A549 (cell line): ENCODE measurements at regions of chr11 and their contacts with region 1.

Region 1: DNA sequence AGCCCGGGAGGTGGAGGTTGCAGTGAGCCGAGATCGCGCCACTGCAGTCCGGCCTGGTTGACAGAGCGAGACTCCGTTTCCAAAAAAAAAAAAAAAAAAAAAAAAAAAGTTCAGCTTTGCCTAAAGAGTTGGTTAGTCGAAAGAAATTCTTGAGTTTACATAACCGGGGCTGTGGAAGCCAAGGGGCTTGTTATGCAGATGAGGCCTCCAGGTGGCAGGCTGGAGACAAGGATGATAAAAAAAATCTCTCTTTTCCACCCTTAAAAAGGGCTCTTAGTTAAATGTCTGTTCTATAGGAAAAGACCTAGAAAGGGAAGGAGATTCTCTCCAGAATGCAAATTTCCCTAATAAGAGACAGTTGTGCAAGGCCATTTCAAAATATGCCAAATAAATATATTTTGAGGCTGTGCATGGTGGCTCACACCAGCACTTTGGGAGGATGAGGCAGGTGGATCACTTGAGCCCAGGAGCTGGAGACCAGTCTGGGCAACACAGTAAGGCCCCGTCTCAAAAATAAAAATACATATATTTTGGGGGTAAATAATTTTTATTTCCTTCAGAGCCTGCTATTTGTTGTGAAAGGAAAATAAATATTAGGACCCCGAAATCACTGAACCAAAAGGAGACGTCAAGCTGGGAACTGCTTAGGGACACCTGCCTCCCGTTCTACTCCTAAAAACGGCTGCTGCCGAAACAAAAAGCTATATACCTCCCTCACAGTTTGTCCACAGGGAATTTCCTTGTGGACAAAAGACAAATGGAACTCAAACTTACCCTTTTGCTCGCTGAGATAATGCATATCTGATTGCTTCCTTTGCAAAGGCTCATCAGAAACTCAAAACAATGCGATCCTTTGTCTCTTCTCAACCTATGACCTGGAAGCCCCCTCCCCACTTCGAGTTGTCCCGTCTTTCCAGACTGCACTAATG is 2.4 kb upstream of the IFITM2 start:
- DNase-seq: peak; percentile 74 to 84
- ATAC-seq: peak; percentile 53 to 62; a peak in 4 of 6 replicates
- H3K4me3 ChIP-seq: no peak overlapping the region
- H3K27ac ChIP-seq: peak overlapping the region in 1 of 2 experiments; percentile 69; a peak in 3 of 6 replicates
- H3K4me1 ChIP-seq: peaks cover 22% of the 10 kb centered on the region; the same call in 2 of the 3 replicates
- CTCF ChIP-seq: peak; percentile 68
- EP300 ChIP-seq: no peak
- POLR2A ChIP-seq: no peak
- RAD21 ChIP-seq: peak; percentile 69 to 70

Region 2: DNA sequence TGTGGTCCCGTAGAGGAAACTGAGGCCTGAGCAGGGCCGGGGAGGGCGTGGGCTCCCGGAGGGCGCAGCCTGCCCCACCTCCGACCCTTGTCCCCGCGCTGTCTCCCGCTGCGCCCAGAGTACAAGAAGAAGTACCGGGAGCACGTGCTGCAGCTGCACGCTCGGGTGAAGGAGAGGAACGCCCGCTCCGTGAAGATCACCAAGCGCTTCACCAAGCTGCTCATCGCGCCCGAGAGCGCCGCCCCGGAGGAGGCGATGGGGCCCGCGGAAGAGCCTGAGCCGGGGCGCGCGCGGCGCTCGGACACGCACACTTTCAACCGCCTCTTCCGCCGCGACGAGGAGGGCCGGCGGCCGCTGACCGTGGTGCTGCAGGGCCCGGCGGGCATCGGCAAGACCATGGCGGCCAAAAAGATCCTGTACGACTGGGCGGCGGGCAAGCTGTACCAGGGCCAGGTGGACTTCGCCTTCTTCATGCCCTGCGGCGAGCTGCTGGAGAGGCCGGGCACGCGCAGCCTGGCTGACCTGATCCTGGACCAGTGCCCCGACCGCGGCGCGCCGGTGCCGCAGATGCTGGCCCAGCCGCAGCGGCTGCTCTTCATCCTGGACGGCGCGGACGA is 25.1 kb before region 1 on chr11:
- CTCF ChIA-PET with region 1: interaction called, 13 read pairs
- POLR2A ChIA-PET with region 1: no interaction called
- DNase-seq: peak in 1 of 2 experiments; percentile 48
- ATAC-seq: peak; percentile 52 to 65
- H3K4me3 ChIP-seq: peak overlapping the region; percentile 33
- H3K27ac ChIP-seq: 0 out of 6 replicates have a peak overlapping the region, but pooled peaks of 1 of the 2 experiments have one; percentile 6
- H3K4me1 ChIP-seq: peaks cover 14% of the 10 kb centered on the region; the same call in 1 of the 3 replicates
- CTCF ChIP-seq: no peak
- EP300 ChIP-seq: no peak
- POLR2A ChIP-seq: no peak
- RAD21 ChIP-seq: no peak

Region 3: GRCh38 chr11:316031-316701 is 11.0 kb after region 1 on chr11:
- CTCF ChIA-PET with region 1: interaction called, 38 read pairs
- POLR2A ChIA-PET with region 1: no interaction called
- DNase-seq: no peak
- ATAC-seq: no peak
- H3K4me3 ChIP-seq: no peak overlapping the region
- H3K27ac ChIP-seq: no peak overlapping the region
- H3K4me1 ChIP-seq: peaks cover 9% of the 10 kb centered on the region; the same call in 1 of the 3 replicates
- CTCF ChIP-seq: no peak
- EP300 ChIP-seq: no peak
- POLR2A ChIP-seq: no peak
- RAD21 ChIP-seq: no peak

Region 4: GRCh38 chr11:363948-364761 is 59.0 kb after region 1 on chr11:
- CTCF ChIA-PET with region 1: interaction called, 75 read pairs
- POLR2A ChIA-PET with region 1: no interaction called
- DNase-seq: peak; percentile 38 to 64
- ATAC-seq: peak; percentile 22 to 48; a peak in 3 of 6 replicates
- H3K4me3 ChIP-seq: no peak overlapping the region
- H3K27ac ChIP-seq: peak overlapping the region in 1 of 2 experiments; percentile 6; a peak in 1 of 6 replicates
- H3K4me1 ChIP-seq: peaks cover 8% of the 10 kb centered on the region; the same call in 2 of the 3 replicates
- CTCF ChIP-seq: peak; percentile 18; the same call in 1 of the 3 replicates
- EP300 ChIP-seq: no peak
- POLR2A ChIP-seq: no peak
- RAD21 ChIP-seq: no peak